Natural killer cell (primary cell): ENCODE measurements at regions of chr1 and their contacts with region 1.

Region 1: DNA sequence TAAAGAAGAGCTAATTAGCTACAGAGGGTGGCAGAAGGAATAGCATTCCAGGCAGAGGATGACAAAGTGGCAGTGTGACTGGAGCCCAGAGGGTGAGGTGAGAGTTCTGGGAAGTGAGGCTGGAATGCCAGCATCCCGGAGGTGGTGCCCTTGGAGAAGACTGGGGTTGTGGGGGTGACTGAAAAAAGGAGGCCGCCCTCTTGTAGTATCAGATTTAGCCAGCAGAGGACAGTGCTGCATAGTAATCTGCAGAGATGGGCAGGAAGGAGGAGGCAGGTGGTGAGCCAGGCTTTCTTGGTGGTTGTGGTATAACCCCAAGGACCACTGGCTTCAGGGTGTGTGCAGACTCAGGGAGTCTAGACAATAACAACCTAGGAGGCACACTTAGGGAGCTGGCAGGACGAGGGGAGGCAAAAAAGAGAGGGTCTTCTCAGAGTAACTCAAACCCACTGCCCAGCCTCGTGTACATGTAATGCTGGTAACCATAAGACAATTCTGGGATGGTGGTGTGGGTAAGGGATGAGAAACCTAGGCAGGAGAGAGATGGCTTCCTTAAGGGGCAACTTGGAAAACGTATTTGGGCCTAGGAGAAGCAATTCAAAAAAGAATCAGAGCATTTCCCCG is 30.5 kb downstream of the MROH7 start:
- DNase-seq: peak; percentile 68 to 78
- ATAC-seq: peak; percentile 89 to 99 (median 98)
- H3K4me3 ChIP-seq: no peak overlapping the region
- H3K4me3 Mint-ChIP-seq: no peak overlapping the region
- H3K27ac ChIP-seq: no peak overlapping the region
- H3K27ac Mint-ChIP-seq: peak overlapping the region in 1 of 2 donors; percentile 29
- H3K4me1 ChIP-seq: peaks cover 4% of the 10 kb centered on the region
- H3K4me1 Mint-ChIP-seq: peaks cover 10 to 11% of the 10 kb centered on the region in 2 donors
- H3K27me3 ChIP-seq: no peaks in the 10 kb centered on the region
- H3K27me3 Mint-ChIP-seq: no peaks in the 10 kb centered on the region
- CTCF ChIP-seq: peak; percentile 89

Region 2: DNA sequence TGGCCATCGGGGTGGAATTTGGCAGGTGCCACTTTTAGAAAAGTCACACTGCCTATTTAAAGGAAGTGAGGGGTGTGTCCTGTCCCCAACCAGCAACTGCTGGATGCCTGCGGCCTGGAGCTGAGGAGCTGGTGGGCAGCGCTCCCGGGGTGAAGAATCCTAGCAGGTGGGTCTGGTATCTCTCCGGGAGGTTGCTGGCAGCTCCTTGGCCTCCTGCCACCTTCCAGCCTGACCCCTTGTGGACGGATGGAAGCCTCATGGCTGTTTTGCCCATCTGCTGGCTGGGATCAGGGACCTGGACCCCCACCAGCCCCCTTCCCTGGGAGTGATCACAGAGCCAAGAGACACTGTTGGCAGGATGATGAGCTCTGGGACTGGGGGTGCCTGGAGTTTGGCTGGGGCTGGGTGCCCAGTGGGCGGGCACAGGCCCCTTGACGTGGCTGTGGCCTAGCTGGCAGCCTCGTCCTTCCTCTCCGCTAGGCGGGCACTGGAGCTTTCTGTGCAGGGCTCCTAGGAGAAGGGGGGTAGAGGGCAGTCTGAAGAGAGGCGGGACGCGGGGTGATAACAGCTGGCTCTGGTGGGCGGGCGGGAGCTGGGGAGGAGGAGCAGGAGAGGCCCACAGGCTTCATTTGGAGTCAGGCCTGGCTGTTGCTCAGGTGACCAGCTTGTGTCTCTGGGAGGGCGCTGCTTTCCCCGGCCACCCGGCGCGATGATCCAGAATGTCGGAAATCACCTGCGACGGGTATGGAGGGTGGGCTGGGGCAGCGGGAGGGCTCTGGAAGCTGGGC is 124.3 kb before region 1 on chr1 and contains the start of gene ACOT11:
- intact Hi-C with region 1: no loop called
- DNase-seq: peak in 1 of 2 donors; percentile 17
- ATAC-seq: peak in 1 of 3 donors; percentile 45
- H3K4me3 ChIP-seq: no peak within 1 kb of the TSS
- H3K4me3 Mint-ChIP-seq: no peak within 1 kb of the TSS
- H3K27ac ChIP-seq: no peak within 1 kb of the TSS
- H3K27ac Mint-ChIP-seq: no peak within 1 kb of the TSS
- H3K4me1 ChIP-seq: peaks cover 3% of the 10 kb centered on the region
- H3K4me1 Mint-ChIP-seq: peaks cover 9% of the 10 kb centered on the region in 2 donors
- H3K27me3 ChIP-seq: no peaks in the 10 kb centered on the region
- H3K27me3 Mint-ChIP-seq: peaks cover 0 to 7% of the 10 kb centered on the region in 2 donors
- CTCF ChIP-seq: no peak
- total RNA-seq, gene ACOT11: 0.61 to 1.2 (median 0.85) TPM

Region 3: GRCh38 chr1:54996359-54996868 is 324.3 kb after region 1 on chr1:
- intact Hi-C with region 1: loop called (anchors 2 kb)
- DNase-seq: peak; percentile 79 to 88
- ATAC-seq: peak; percentile 83 to 86 (median 83)
- H3K4me3 ChIP-seq: no peak overlapping the region
- H3K4me3 Mint-ChIP-seq: peak overlapping the region; percentile 62
- H3K27ac ChIP-seq: no peak overlapping the region
- H3K27ac Mint-ChIP-seq: peak overlapping the region; percentile 52 to 74
- H3K4me1 ChIP-seq: peaks cover 21% of the 10 kb centered on the region
- H3K4me1 Mint-ChIP-seq: peaks cover 20 to 23% of the 10 kb centered on the region in 2 donors
- H3K27me3 ChIP-seq: peaks cover 15% of the 10 kb centered on the region
- H3K27me3 Mint-ChIP-seq: peaks cover 24 to 26% of the 10 kb centered on the region in 2 donors
- CTCF ChIP-seq: peak; percentile 74